ENCODE measurements at regions of chr15 and their contacts with region 1.

Region 1: DNA sequence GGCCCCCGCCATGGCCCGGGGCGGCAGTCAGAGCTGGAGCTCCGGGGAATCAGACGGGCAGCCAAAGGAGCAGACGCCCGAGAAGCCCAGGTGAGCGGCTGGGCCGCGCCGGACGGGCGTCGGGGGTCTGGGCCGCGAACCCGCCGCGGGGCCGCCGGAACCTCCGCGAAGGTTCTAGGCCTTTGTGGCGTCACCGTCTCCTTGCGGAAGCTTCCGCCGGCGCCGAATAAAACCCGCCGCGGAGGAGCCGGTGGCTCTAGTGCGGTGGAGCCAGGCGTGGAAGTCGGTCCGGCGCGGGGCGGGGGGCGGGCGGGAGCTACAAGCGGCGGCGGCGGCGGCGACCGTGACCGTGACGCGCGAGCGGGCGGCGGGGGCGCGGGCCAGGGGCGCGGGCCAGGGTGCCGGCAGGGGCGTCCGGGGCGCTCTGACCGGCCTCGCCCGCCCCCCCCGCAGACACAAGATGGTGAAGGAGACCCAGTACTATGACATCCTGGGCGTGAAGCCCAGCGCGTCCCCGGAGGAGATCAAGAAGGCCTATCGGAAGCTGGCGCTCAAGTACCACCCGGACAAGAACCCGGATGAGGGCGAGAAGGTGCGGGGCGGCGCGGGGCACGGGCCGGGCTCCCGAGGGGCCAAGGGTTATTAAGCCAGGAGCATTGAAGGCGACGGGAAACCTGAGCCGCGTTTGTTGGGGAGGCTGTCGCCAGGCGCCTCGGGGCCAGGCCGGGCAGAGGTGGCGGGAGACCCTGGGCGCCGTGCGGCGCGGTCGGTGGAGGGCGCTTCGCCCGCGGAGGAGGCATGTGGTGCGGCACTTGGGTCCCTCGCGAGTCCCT is at the start of gene DNAJA4:
- DNase-seq: peak; percentile 60 to 74 (median 68)
- ATAC-seq: peak; percentile 82
- H3K4me3 ChIP-seq: peak within 1 kb of the TSS; percentile 74
- H3K4me3 Mint-ChIP-seq: peak within 1 kb of the TSS; percentile 81 to 94 (median 90)
- H3K27ac ChIP-seq: peak within 1 kb of the TSS; percentile 83
- H3K27ac Mint-ChIP-seq: peak within 1 kb of the TSS; percentile 87 to 96 (median 92)
- H3K4me1 ChIP-seq: peaks cover 13 to 18% of the 10 kb centered on the region in 2 donors
- H3K4me1 Mint-ChIP-seq: peaks cover 25 to 48% (median 34%) of the 10 kb centered on the region in 7 donors
- H3K27me3 ChIP-seq: no peaks in the 10 kb centered on the region
- H3K27me3 Mint-ChIP-seq: no peaks in the 10 kb centered on the region
- total RNA-seq, gene DNAJA4: 28.3 to 44.7 (median 38.1) TPM

Region 2: DNA sequence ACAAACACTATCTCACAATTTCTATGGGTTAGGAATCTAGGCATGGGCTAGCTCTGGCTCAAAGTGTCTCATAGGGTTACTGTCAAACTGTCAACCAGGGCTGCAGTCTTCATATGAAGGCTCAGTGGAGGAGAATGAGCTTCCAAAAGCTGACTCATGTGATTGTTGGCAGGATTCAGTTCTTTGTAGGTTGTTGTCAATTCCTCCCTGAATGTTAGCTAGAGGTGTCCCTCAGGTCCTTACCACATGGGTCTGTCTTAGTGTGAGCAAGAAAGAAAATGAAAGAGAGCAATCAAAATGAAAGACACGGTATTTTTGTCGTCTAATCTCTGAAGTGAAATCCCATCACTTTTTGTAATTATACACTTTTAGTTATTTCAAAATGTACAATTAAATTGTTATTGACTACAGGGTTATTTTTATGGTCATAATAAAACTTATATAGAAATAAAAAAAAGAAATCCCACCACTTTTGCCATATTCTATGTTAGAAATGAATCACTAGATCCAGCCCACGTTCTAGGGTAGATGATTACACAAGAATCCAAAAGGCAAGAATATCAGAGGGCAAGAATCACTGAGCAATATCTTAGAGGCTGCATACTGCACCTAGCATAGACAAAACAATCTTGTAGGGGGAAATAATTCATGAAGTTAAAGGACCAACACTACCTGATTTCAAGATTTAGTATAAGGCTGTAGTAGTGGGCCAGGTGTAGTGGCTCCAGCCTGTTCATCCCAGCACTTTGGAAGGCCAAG is 38.6 kb before region 1 on chr15:
- CTCF ChIA-PET with region 1: no interaction called
- POLR2A ChIA-PET with region 1: no interaction called
- intact Hi-C with region 1: no loop called
- DNase-seq: no peak
- ATAC-seq: no peak
- H3K4me3 ChIP-seq: no peak overlapping the region
- H3K4me3 Mint-ChIP-seq: peak overlapping the region in 1 of 10 donors; percentile 26
- H3K27ac ChIP-seq: no peak overlapping the region
- H3K27ac Mint-ChIP-seq: peak overlapping the region in 1 of 9 donors; percentile 22
- H3K4me1 ChIP-seq: peaks cover 0 to 6% of the 10 kb centered on the region in 2 donors
- H3K4me1 Mint-ChIP-seq: peaks cover 0 to 2% (median 0%) of the 10 kb centered on the region in 7 donors
- H3K27me3 ChIP-seq: no peaks in the 10 kb centered on the region
- H3K27me3 Mint-ChIP-seq: peaks cover 0 to 8% (median 0%) of the 10 kb centered on the region in 5 donors

Region 3: GRCh38 chr15:78299101-78299930 is 34.8 kb after region 1 on chr15 and contains the start of gene SKIC8:
- CTCF ChIA-PET with region 1: interaction called, 4 read pairs
- POLR2A ChIA-PET with region 1: interaction called, 36 read pairs
- intact Hi-C with region 1: loop called (anchors 1 kb)
- DNase-seq: peak; percentile 84 to 92 (median 91)
- ATAC-seq: peak; percentile 99
- H3K4me3 ChIP-seq: peak within 1 kb of the TSS; percentile 88
- H3K4me3 Mint-ChIP-seq: peak within 1 kb of the TSS; percentile 94 to 99 (median 97)
- H3K27ac ChIP-seq: peak within 1 kb of the TSS; percentile 80
- H3K27ac Mint-ChIP-seq: peak within 1 kb of the TSS; percentile 89 to 97 (median 94)
- H3K4me1 ChIP-seq: peaks cover 8 to 15% of the 10 kb centered on the region in 2 donors
- H3K4me1 Mint-ChIP-seq: peaks cover 12 to 41% (median 31%) of the 10 kb centered on the region in 7 donors
- H3K27me3 ChIP-seq: no peaks in the 10 kb centered on the region
- H3K27me3 Mint-ChIP-seq: no peaks in the 10 kb centered on the region
- total RNA-seq, gene SKIC8: 26.7 to 48.7 (median 43.6) TPM

Measured in naive thymus-derived CD4-positive, alpha-beta T cell (primary cell).